Activated CD4-positive, alpha-beta memory T cell treated with anti-CD3 and anti-CD28 coated beads, Interleukin-2, amount 10 ng/mL, durations not matched to agents 7 days and 5 days (primary cell): ENCODE measurements at regions of chr7 and their contacts with region 1.

Region 1: GRCh38 chr7:97835296-97836138 is 36.7 kb downstream of the ASNS start:
- DNase-seq: peak; percentile 64
- H3K4me3 Mint-ChIP-seq: no peak overlapping the region
- H3K27ac Mint-ChIP-seq: no peak overlapping the region
- H3K4me1 Mint-ChIP-seq: no peaks in the 10 kb centered on the region
- H3K27me3 Mint-ChIP-seq: peaks cover 16% of the 10 kb centered on the region

Region 2: DNA sequence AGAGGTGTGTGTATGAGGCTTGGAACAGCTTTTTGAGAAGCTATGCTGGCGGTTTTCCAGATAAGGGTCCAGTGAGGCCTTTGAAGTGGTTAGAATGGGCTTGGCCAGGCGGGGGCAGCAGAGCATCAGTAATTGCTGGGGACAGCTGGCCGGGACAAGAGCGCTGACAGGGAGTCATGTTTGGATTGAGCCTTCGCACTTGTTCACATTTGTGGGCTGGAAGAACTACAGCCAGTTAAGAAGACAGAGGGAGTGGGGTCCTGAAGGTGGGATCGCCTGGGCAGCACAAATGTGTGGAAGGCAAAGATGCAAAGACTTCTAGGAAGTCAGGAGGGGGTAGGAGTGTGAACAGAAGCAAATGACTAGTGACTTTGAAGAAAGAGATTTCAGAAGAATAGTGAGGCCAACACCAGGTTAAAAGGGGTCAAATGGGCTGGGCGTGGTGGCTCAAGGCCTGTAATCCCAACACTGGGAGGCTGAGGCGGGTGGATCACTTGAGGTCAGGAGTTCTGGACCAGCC is 730.7 kb before region 1 on chr7:
- CTCF ChIA-PET with region 1: interaction called, 18 read pairs
- POLR2A ChIA-PET with region 1: no interaction called
- DNase-seq: peak; percentile 76
- H3K4me3 Mint-ChIP-seq: no peak overlapping the region
- H3K27ac Mint-ChIP-seq: no peak overlapping the region
- H3K4me1 Mint-ChIP-seq: no peaks in the 10 kb centered on the region
- H3K27me3 Mint-ChIP-seq: peaks cover 16% of the 10 kb centered on the region

Region 3: DNA sequence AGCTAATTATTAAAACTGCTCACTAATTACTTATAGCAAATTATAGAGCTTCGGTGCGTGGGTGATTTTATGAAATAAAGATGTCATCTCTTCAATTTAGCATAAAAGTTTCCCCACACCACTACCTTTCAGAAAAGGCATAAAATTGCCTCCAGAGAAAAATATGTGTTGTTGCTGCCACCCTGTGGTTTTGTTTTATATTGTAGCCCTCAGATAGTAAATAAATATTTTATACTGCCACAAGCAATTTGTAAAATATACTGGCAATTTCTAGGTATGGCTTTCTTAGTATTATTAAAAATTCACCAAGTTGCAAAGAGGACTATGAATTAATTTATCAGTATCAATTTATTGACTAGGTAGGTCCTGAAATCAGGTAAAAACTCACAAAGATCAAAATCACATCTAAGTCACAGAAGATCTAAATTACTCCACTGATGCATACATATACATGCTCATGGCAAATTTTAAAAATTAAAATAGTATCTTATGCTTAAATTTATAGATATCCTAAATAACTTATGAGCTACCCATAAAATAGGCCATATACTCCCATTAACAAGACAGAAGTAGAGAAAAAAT is 10.2 kb after region 1 on chr7:
- CTCF ChIA-PET with region 1: interaction called, 21 read pairs
- POLR2A ChIA-PET with region 1: no interaction called
- DNase-seq: no peak
- H3K4me3 Mint-ChIP-seq: no peak overlapping the region
- H3K27ac Mint-ChIP-seq: no peak overlapping the region
- H3K4me1 Mint-ChIP-seq: no peaks in the 10 kb centered on the region
- H3K27me3 Mint-ChIP-seq: peaks cover 3% of the 10 kb centered on the region